Colonic mucosa (tissue), 4 donors: ENCODE measurements at regions of chr6 and their contacts with region 1.

Region 1: GRCh38 chr6:40308533-40309306 is 278.4 kb downstream of the LRFN2 start:
- DNase-seq: peak; percentile 73
- H3K4me3 ChIP-seq: no peak overlapping the region
- H3K27ac ChIP-seq: no peak overlapping the region
- H3K4me1 ChIP-seq: no peaks in the 10 kb centered on the region
- H3K27me3 ChIP-seq: peaks cover 5% of the 10 kb centered on the region
- CTCF ChIP-seq: peak; percentile 90

Region 2: DNA sequence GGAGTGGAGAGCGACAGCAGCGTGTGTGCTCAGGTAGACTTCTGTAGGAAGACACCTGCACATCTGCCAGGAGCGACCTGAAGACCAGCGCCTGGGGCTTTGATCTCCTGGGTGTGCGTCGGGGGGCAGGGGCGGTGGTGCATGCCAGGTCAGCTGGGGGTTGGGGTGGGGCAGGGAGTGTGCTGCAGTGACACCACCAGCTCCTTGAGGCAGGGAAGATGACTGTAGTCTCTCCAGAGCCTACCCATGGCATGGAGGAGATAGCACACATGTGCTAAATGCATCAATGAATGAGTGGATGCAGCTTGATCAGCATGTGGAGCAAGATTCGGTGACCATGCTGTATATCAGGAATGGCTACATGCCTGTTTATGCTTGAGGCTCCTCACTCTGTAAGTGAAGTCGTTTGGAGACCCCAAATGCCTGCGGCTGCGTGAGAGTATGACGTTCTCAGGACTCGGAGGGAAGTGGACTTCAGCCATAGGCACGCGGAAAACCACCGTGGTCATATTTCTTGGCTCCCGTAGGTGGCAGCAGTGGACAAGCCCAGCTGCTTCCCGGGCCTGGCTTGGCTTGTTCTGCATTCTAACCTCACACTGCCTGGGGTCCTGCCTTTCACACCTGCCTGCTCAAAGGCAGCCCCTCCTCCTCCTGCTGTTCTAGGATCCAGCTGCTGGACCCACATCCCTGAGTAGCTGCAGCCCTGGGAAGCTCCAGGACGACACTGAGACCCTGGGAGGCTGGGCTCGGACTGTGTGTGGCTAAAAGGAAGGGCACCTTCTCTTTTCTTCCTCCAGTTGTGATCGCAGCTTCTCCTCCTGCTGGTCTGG is 946.8 kb before region 1 on chr6:
- intact Hi-C with region 1: loop called (anchors 10 kb)
- DNase-seq: peak; percentile 51
- H3K4me3 ChIP-seq: no peak overlapping the region
- H3K27ac ChIP-seq: no peak overlapping the region
- H3K4me1 ChIP-seq: no peaks in the 10 kb centered on the region
- H3K27me3 ChIP-seq: no peaks in the 10 kb centered on the region
- CTCF ChIP-seq: peak; percentile 66

Region 3: DNA sequence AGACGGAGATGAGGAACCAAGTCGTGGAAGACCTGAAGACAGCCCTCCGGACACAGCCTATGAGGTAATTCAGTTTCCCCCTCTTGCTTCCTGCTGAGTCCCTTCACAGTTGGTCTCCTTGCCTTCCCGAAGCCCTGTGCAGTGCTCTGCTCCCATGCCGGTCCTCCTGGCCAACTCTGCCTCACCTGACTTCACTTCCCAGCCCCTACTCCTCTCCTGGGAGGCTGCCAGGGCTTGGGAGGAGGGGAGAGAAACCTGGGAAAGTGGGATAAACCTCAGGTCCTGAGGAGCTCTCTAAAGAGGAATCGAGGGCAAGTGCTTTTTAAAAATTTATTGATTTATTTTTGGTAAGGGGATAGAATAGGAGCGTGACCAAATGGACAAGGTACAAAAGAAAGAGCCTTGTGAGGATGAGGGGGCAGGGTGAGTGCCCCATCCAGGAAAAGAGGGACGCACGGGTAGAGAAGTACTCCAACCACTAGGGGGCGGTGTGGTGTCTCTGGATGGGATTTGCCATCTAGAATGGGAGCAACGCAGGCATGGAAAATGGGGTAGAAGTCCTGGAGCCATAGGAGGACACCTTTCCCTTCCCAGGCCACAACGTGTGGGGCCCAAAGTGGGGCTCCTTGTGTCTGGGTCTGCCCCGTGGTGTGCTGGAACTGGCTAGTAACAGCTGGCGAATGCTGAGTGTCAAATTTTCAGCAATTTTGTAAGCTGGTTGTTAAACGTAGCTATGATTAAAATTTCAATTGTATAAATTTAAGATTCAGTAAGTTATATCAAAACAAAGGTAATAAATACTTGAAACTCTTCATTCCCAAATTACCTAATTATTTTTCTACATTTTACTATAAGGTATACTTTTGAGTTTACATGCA is 443.5 kb before region 1 on chr6:
- intact Hi-C with region 1: loop called (anchors 10 kb)
- DNase-seq: peak; percentile 84
- H3K4me3 ChIP-seq: no peak overlapping the region
- H3K27ac ChIP-seq: no peak overlapping the region
- H3K4me1 ChIP-seq: no peaks in the 10 kb centered on the region
- H3K27me3 ChIP-seq: no peaks in the 10 kb centered on the region
- CTCF ChIP-seq: peak; percentile 80

Region 4: DNA sequence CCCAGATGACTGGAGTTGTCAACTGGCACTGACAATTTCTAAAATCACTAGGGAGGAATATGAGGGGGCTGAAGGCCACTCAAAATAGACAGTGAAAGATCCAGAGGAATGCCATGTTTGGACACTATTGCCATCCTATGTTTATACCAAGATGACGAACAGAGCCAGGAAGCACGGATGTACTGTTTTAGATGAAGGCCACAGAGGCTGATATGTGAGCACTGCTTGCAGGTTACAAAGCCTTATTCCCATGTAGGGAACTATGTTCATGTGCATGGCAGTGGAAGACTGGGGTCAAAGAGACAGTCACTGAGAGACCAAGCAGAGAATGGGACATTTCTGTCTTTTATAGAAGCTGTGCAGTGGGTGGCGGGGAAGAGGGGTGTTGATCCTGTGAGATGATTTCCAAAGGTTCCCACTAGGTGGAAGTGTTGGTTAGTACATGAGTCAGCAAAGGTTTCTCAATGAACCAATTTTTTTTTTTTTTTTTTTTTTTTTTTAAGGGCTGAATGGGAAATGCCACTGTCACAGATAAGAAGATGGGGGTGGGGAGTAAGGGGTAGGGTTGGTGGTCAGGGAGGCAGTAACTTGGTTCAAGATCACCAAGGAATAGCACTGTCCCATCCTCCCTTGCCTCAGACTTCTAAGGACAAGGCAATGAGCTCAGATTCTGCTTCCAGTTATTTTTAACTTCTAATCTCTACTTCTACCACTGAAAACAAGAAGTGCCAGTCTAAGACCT is 327.7 kb before region 1 on chr6:
- intact Hi-C with region 1: loop called (anchors 2 kb)
- DNase-seq: peak; percentile 45
- H3K4me3 ChIP-seq: no peak overlapping the region
- H3K27ac ChIP-seq: no peak overlapping the region
- H3K4me1 ChIP-seq: no peaks in the 10 kb centered on the region
- H3K27me3 ChIP-seq: no peaks in the 10 kb centered on the region
- CTCF ChIP-seq: peak; percentile 35

Region 5: GRCh38 chr6:40258531-40258930 is 50.2 kb before region 1 on chr6:
- intact Hi-C with region 1: no loop called
- DNase-seq: no peak
- H3K4me3 ChIP-seq: no peak overlapping the region
- H3K27ac ChIP-seq: no peak overlapping the region
- H3K4me1 ChIP-seq: no peaks in the 10 kb centered on the region
- H3K27me3 ChIP-seq: no peaks in the 10 kb centered on the region
- CTCF ChIP-seq: no peak